ENCODE measurements at regions of chr11 and their contacts with region 1.

Region 1: GRCh38 chr11:36292311-36292722 is 3.1 kb upstream of the COMMD9 start:
- DNase-seq: no peak
- ATAC-seq: peak in 2 of 4 donors; percentile 27 to 29
- H3K4me3 ChIP-seq: no peak overlapping the region
- H3K27ac ChIP-seq: no peak overlapping the region
- H3K4me1 ChIP-seq: no peaks in the 10 kb centered on the region
- H3K27me3 ChIP-seq: no peaks in the 10 kb centered on the region
- CTCF ChIP-seq: peak in 3 of 4 donors; percentile 20 to 32 (median 25)

Region 2: DNA sequence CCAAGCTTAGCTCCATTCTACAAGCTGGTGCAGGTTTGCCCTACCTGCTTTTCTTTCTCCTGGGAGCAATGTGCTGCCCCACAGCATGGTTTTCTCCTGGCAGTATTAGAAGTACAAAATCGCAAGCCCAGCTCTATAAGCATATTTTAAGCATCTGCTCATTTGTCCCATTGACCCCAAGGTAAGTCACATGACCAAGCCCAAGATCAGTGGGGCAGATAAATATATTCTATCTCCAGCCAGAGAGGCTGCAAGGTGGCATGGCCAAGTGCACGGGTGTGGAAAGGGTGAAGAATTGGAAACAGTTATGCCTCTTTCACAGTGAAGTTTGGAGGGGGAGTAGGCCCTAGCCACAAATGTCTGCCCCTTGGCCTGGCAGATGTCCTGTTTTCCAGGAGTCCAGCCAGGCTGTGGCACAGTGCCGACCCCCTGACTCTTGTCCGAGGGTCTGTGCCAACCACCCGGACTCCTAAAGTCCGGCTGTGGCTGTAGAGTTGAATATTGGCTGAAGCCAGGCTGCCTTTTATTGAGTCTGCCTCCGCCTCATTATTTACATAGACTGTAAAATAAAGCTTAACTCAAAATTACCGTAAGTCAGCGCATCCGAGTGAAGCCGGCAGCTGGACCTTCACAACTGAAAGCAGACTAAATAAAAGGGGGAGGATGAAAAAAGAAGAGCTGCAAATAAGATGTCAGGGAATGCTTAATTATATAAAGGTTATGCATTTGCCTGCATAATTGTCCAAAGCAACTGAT is 168.8 kb before region 1 on chr11:
- intact Hi-C with region 1: no loop called
- DNase-seq: no peak
- ATAC-seq: peak in 1 of 4 donors; percentile 63
- H3K4me3 ChIP-seq: no peak overlapping the region
- H3K27ac ChIP-seq: no peak overlapping the region
- H3K4me1 ChIP-seq: no peaks in the 10 kb centered on the region
- H3K27me3 ChIP-seq: no peaks in the 10 kb centered on the region
- CTCF ChIP-seq: no peak

Region 3: GRCh38 chr11:36411202-36411640 is 118.9 kb after region 1 on chr11:
- intact Hi-C with region 1: no loop called
- DNase-seq: peak in 1 of 6 donors; percentile 48
- ATAC-seq: peak in 3 of 4 donors; percentile 29 to 86 (median 70)
- H3K4me3 ChIP-seq: no peak overlapping the region
- H3K27ac ChIP-seq: peak overlapping the region in 2 of 4 donors; percentile 11 to 37
- H3K4me1 ChIP-seq: no peaks in the 10 kb centered on the region
- H3K27me3 ChIP-seq: no peaks in the 10 kb centered on the region
- CTCF ChIP-seq: no peak

Region 4: DNA sequence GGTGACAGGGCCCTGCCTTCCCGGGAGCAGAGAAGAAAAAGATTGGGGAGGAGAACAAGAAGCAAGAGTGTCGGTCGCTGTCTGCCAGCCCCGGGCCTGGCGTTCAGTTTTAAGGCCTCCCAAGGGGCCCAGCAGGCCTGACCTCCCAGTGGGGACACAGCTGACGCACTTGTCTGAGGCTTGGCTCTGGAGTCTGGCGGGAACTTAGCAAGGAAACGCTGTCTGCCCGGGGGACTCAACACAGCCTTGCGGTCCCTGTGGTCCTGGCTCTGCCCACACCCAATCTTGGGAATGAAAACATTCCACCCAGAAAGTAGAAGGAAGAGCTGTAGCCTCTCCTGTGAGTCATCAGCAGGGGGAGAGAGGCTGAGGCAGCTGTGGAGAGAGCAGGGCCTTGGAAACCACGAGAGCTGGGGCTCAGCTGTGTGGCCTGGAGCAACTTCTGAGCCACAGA is 163.4 kb after region 1 on chr11:
- intact Hi-C with region 1: loop called in 1 of 3 experiments (anchors 10 kb)
- DNase-seq: peak in 2 of 6 donors; percentile 16 to 56
- ATAC-seq: peak in 3 of 4 donors; percentile 70 to 76 (median 73)
- H3K4me3 ChIP-seq: no peak overlapping the region
- H3K27ac ChIP-seq: peak overlapping the region in 1 of 4 donors; percentile 9
- H3K4me1 ChIP-seq: peaks cover 0 to 7% (median 0%) of the 10 kb centered on the region in 3 donors
- H3K27me3 ChIP-seq: no peaks in the 10 kb centered on the region
- CTCF ChIP-seq: no peak

Region 5: DNA sequence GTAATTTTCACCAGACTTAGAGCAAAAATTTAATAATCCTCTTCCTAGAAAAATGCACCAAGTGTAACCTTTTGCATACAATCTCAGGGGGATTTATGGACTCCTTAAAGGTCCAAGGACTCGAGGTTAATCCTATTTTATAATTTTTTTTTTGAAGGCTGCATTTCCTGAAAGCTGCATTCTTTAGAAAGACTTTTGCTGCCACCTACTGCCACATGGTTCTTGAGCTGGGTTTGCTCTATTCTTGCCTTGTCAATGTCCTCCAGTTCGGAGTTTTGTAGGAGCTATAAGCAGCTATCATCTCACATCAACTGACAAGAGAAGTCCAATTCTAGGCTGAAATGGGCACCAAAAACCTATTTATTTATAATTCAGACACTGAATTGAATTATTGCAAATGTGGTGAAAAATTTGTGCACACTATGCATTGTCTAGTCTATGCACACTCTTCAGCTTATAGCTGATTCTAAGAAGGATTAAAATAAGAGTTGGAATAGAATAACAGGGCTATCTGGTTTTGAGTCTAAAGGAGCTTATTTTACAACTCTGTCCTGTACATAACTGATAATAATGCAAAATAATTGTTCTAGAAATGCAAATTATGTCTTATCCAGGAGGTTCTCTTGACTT is 186.5 kb after region 1 on chr11:
- intact Hi-C with region 1: loop called in 1 of 3 experiments (anchors 10 kb)
- DNase-seq: peak in 1 of 6 donors; percentile 35
- ATAC-seq: peak in 3 of 4 donors; percentile 81 to 83 (median 82)
- H3K4me3 ChIP-seq: no peak overlapping the region
- H3K27ac ChIP-seq: no peak overlapping the region
- H3K4me1 ChIP-seq: no peaks in the 10 kb centered on the region
- H3K27me3 ChIP-seq: no peaks in the 10 kb centered on the region
- CTCF ChIP-seq: peak in 2 of 4 donors; percentile 18 to 23

Measured in pancreas (tissue), 10 donors.